H1 (cell line): ENCODE measurements at regions of chr1 and their contacts with region 1.

Region 1: GRCh38 chr1:161209790-161210409 is 5.2 kb upstream of the FCER1G start:
- DNase-seq: peak; percentile 67 to 92
- H3K4me3 ChIP-seq: no peak overlapping the region
- H3K27ac ChIP-seq: 0 out of 2 replicates have a peak overlapping the region, but pooled peaks have one; percentile 5
- H3K4me1 ChIP-seq: peaks cover 0 to 4% (median 1%) of the 10 kb centered on the region in 4 experiments; a peak in 4 of 7 replicates
- H3K27me3 ChIP-seq: no peaks in the 10 kb centered on the region
- CTCF ChIP-seq: peak; percentile 89 to 98 (median 97)
- EP300 ChIP-seq: 0 out of 3 replicates have a peak, but pooled peaks of 1 of the 2 experiments have one; percentile 41
- POLR2A ChIP-seq: no peak
- RAD21 ChIP-seq: peak; percentile 94 to 98

Region 2: DNA sequence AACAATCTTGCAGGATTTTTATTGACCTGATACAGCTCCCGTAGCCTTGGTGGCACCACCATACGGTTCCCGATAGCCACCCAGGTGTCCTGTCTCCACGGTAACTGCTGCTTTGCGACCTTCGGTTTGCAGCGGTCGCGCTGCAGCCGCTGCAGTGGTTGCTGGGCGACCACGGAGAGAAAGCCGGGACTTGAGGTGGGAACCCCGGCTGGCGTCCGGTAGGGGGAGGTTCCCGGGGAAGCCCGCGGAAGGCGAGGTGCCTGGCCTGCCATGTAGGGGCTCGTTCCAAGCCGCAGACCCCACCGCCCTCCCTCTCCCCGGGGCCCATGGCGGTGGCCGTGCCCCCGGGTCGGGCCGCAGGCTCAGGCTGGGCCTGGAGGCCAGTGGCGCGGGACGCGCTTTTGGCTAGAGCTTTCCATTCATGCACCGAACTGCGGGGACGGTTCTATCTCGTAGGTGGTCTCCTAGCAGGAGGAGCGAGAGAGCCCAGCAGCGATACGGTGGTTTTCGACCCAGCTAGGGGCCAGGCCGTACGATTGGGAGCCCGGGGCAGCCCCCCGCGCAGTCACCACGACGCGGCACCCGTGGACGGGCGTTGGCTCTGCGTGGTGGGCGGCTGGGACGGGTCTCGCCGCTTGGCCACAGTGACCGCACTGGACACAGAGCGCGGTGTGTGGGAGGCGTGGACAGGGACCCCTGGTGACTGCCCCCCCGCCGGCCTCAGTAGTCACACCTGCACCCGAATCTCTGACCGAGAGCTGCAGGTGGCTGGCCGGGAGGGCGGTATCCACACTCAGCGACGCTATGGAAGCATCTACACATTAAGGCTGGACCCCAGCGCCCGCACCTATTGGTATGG is 111.5 kb before region 1 on chr1 and contains the start of gene KLHDC9:
- CTCF ChIA-PET with region 1: no interaction called
- POLR2A ChIA-PET with region 1: no interaction called
- DNase-seq: peak in 1 of 2 experiments; percentile 87
- H3K4me3 ChIP-seq: peak within 1 kb of the TSS; percentile 63 to 89 (median 71)
- H3K27ac ChIP-seq: no peak within 1 kb of the TSS
- H3K4me1 ChIP-seq: peaks cover 0 to 6% (median 0%) of the 10 kb centered on the region in 4 experiments; a peak in 2 of 7 replicates
- H3K27me3 ChIP-seq: no peaks in the 10 kb centered on the region
- CTCF ChIP-seq: peak in 2 of 3 experiments; percentile 30 to 37; a peak in 3 of 4 replicates
- EP300 ChIP-seq: peak in 1 of 2 experiments; percentile 33; a peak in 1 of 3 replicates
- POLR2A ChIP-seq: peak in 1 of 2 experiments; percentile 51; a peak in 1 of 3 replicates
- RAD21 ChIP-seq: peak; percentile 5 to 12; a peak in 1 of 4 replicates
- total RNA-seq, gene KLHDC9: 4.0 and 6.5 TPM in 2 replicates

Region 3: GRCh38 chr1:161171191-161171590 is 38.7 kb before region 1 on chr1:
- CTCF ChIA-PET with region 1: interaction called, 10 read pairs
- POLR2A ChIA-PET with region 1: no interaction called
- DNase-seq: no peak
- H3K4me3 ChIP-seq: no peak overlapping the region
- H3K27ac ChIP-seq: no peak overlapping the region
- H3K4me1 ChIP-seq: peaks cover 0 to 2% (median under 1%) of the 10 kb centered on the region in 4 experiments; a peak in 3 of 7 replicates
- H3K27me3 ChIP-seq: no peaks in the 10 kb centered on the region
- CTCF ChIP-seq: peak; percentile 18 to 28 (median 27); a peak in 3 of 4 replicates
- EP300 ChIP-seq: no peak
- POLR2A ChIP-seq: no peak
- RAD21 ChIP-seq: peak in 1 of 2 experiments; percentile 14; a peak in 1 of 4 replicates

Region 4: DNA sequence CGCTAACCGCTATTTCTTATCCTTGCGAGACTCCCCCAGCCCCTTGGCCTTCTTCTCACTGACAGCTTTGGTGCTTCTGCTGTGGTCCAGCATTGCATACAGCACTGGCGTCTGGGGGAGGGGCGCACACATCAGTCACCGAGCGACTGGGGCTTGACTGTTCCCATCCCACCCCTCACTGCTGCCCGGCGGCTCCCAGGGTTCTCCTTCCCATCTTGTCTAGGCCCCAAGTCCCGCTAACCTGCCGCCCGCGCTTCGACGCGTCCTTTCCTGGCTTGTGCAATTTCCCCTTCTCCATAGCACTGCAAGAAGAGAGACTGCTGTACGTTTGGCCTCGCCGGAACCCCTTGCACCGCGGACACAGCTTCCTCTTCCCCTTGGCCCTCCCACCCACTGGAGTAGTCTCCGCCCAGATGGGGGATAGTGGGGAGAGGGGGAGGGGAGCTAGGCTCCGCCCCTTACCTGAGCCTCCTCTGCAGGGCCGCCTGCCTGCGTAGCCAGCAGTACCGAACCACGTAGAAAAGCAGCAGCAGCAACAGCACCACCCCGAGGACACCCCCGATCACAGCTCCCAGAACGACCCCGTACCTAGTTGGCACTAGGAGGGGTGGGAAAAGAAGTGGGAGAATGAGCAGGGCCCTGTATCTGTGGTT is 96.1 kb after region 1 on chr1:
- CTCF ChIA-PET with region 1: interaction called, 20 read pairs
- POLR2A ChIA-PET with region 1: interaction called, 3 read pairs
- DNase-seq: peak; percentile 96 to 97
- H3K4me3 ChIP-seq: peak overlapping the region; percentile 70 to 87 (median 79)
- H3K27ac ChIP-seq: no peak overlapping the region
- H3K4me1 ChIP-seq: peaks cover 0 to 16% (median 9%) of the 10 kb centered on the region in 4 experiments; a peak in 6 of 7 replicates
- H3K27me3 ChIP-seq: no peaks in the 10 kb centered on the region
- CTCF ChIP-seq: peak; percentile 84 to 90 (median 89)
- EP300 ChIP-seq: peak in 1 of 2 experiments; percentile 35; a peak in 1 of 3 replicates
- POLR2A ChIP-seq: peak in 1 of 2 experiments; percentile 55; a peak in 1 of 3 replicates
- RAD21 ChIP-seq: peak; percentile 82 to 85